Naive thymus-derived CD4-positive, alpha-beta T cell (primary cell): ENCODE measurements at regions of chr10 and their contacts with region 1.

Region 1: GRCh38 chr10:114541081-114541796 is 116.8 kb downstream of the ABLIM1 start:
- DNase-seq: peak; percentile 38 to 92 (median 88)
- ATAC-seq: peak; percentile 88
- H3K4me3 ChIP-seq: peak overlapping the region; percentile 32
- H3K4me3 Mint-ChIP-seq: peak overlapping the region; percentile 74 to 86 (median 79)
- H3K27ac ChIP-seq: peak overlapping the region; percentile 94
- H3K27ac Mint-ChIP-seq: peak overlapping the region; percentile 94 to 99 (median 99)
- H3K4me1 ChIP-seq: peaks cover 85 to 97% of the 10 kb centered on the region in 2 donors
- H3K4me1 Mint-ChIP-seq: peaks cover 63 to 98% (median 94%) of the 10 kb centered on the region in 7 donors
- H3K27me3 ChIP-seq: no peaks in the 10 kb centered on the region
- H3K27me3 Mint-ChIP-seq: no peaks in the 10 kb centered on the region

Region 2: GRCh38 chr10:113960617-113961181 is 580.5 kb before region 1 on chr10:
- CTCF ChIA-PET with region 1: no interaction called
- POLR2A ChIA-PET with region 1: no interaction called
- intact Hi-C with region 1: loop called (anchors 5 kb)
- DNase-seq: peak in 5 of 9 donors; percentile 4 to 34 (median 21)
- ATAC-seq: no peak
- H3K4me3 ChIP-seq: peak overlapping the region; percentile 27
- H3K4me3 Mint-ChIP-seq: peak overlapping the region; percentile 31 to 79 (median 67)
- H3K27ac ChIP-seq: no peak overlapping the region
- H3K27ac Mint-ChIP-seq: peak overlapping the region in 8 of 9 donors; percentile 30 to 92 (median 82)
- H3K4me1 ChIP-seq: peaks cover 37 to 47% of the 10 kb centered on the region in 2 donors
- H3K4me1 Mint-ChIP-seq: peaks cover 26 to 64% (median 49%) of the 10 kb centered on the region in 7 donors
- H3K27me3 ChIP-seq: no peaks in the 10 kb centered on the region
- H3K27me3 Mint-ChIP-seq: peaks cover 0 to 27% (median 6%) of the 10 kb centered on the region in 5 donors

Region 3: DNA sequence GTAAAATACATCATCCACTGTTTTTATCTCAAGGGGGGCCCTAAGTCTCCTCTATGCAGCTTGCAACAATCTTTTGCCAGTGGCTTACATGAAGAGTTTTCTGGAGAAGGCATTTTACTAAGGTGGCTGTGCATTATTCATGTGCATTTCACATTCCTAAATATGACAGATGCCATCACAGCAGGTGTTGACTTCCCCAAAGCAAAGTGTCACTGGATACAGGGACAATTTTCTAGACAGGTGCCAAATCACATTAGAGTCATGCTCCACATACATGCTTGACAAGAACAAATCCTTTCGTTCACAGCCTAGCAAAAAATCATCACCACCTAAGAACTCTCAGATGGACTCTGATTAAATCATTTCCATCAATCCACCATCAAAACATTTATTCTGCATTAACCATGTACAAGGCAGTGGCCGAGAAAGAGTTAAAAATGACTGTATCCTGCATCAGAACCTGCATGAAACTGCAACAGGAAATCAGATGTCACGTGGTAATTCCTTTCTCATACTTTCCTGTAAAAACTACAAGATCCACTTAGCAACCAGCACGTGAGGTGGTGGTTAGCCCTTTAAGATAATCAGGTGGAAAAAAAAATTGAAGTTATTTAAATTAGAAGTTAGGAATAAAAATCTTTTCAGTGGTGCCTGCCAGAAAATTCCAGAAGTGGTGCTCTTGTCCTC is 48.7 kb before region 1 on chr10:
- CTCF ChIA-PET with region 1: interaction called, 3 read pairs
- POLR2A ChIA-PET with region 1: interaction called, 78 read pairs
- intact Hi-C with region 1: loop called in 1 of 2 experiments (anchors 1 kb)
- DNase-seq: peak in 7 of 9 donors; percentile 47 to 73 (median 62)
- ATAC-seq: peak; percentile 55
- H3K4me3 ChIP-seq: peak overlapping the region; percentile 19
- H3K4me3 Mint-ChIP-seq: peak overlapping the region; percentile 56 to 83 (median 74)
- H3K27ac ChIP-seq: peak overlapping the region; percentile 74
- H3K27ac Mint-ChIP-seq: peak overlapping the region; percentile 14 to 94 (median 71)
- H3K4me1 ChIP-seq: peaks cover 16 to 55% of the 10 kb centered on the region in 2 donors
- H3K4me1 Mint-ChIP-seq: peaks cover 42 to 94% (median 84%) of the 10 kb centered on the region in 7 donors
- H3K27me3 ChIP-seq: no peaks in the 10 kb centered on the region
- H3K27me3 Mint-ChIP-seq: no peaks in the 10 kb centered on the region

Region 4: DNA sequence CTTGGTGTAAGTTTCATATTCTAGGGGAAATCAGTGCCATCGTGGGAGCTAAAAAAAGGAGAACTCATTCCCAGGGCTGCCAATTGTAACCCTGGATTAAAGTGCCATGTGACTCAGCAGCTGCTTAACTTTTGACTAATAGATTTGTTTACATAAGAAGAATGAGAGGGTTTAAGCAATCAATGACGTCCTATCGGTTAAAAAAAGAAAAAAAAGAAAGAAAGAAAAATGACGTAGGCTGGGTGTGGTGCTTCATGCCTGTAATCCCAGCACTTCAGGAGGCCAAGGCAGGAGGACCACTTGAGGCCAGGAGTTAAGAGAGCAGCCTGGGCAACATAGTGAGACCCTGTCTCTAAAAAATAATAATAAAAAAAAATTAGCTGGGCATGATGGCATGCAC is 20.8 kb before region 1 on chr10:
- CTCF ChIA-PET with region 1: interaction called, 283 read pairs
- POLR2A ChIA-PET with region 1: interaction called, 355 read pairs
- intact Hi-C with region 1: no loop called
- DNase-seq: peak in 4 of 9 donors; percentile 48 to 60 (median 56)
- ATAC-seq: peak; percentile 14
- H3K4me3 ChIP-seq: peak overlapping the region; percentile 25
- H3K4me3 Mint-ChIP-seq: peak overlapping the region; percentile 34 to 97 (median 86)
- H3K27ac ChIP-seq: peak overlapping the region; percentile 94
- H3K27ac Mint-ChIP-seq: peak overlapping the region; percentile 40 to 100 (median 97)
- H3K4me1 ChIP-seq: peaks cover 41 to 77% of the 10 kb centered on the region in 2 donors
- H3K4me1 Mint-ChIP-seq: peaks cover 72 to 95% (median 91%) of the 10 kb centered on the region in 7 donors
- H3K27me3 ChIP-seq: no peaks in the 10 kb centered on the region
- H3K27me3 Mint-ChIP-seq: peaks cover 0 to 3% (median 0%) of the 10 kb centered on the region in 5 donors

Region 5: GRCh38 chr10:114821293-114821914 is 280.2 kb after region 1 on chr10 and contains the start of gene FHIP2A:
- CTCF ChIA-PET with region 1: no interaction called
- POLR2A ChIA-PET with region 1: interaction called, 3 read pairs
- intact Hi-C with region 1: loop called in 1 of 2 experiments (anchors 2 kb)
- DNase-seq: peak; percentile 69 to 96 (median 87)
- ATAC-seq: peak; percentile 98
- H3K4me3 ChIP-seq: peak within 1 kb of the TSS; percentile 83
- H3K4me3 Mint-ChIP-seq: peak within 1 kb of the TSS; percentile 79 to 96 (median 94)
- H3K27ac ChIP-seq: peak within 1 kb of the TSS; percentile 87
- H3K27ac Mint-ChIP-seq: peak within 1 kb of the TSS; percentile 86 to 95 (median 92)
- H3K4me1 ChIP-seq: peaks cover 6 to 22% of the 10 kb centered on the region in 2 donors
- H3K4me1 Mint-ChIP-seq: peaks cover 14 to 44% (median 33%) of the 10 kb centered on the region in 7 donors
- H3K27me3 ChIP-seq: no peaks in the 10 kb centered on the region
- H3K27me3 Mint-ChIP-seq: peaks cover 0 to 29% (median 0%) of the 10 kb centered on the region in 5 donors
- total RNA-seq, gene FHIP2A: 17.5 to 28.7 (median 19.6) TPM

Region 6: GRCh38 chr10:115503546-115503945 is 962.3 kb after region 1 on chr10:
- CTCF ChIA-PET with region 1: no interaction called
- POLR2A ChIA-PET with region 1: no interaction called
- intact Hi-C with region 1: no loop called
- DNase-seq: no peak
- ATAC-seq: no peak
- H3K4me3 ChIP-seq: no peak overlapping the region
- H3K4me3 Mint-ChIP-seq: no peak overlapping the region
- H3K27ac ChIP-seq: no peak overlapping the region
- H3K27ac Mint-ChIP-seq: no peak overlapping the region
- H3K4me1 ChIP-seq: no peaks in the 10 kb centered on the region
- H3K4me1 Mint-ChIP-seq: no peaks in the 10 kb centered on the region
- H3K27me3 ChIP-seq: no peaks in the 10 kb centered on the region
- H3K27me3 Mint-ChIP-seq: no peaks in the 10 kb centered on the region